ENCODE measurements at regions of chr22 and their contacts with region 1.

Region 1: DNA sequence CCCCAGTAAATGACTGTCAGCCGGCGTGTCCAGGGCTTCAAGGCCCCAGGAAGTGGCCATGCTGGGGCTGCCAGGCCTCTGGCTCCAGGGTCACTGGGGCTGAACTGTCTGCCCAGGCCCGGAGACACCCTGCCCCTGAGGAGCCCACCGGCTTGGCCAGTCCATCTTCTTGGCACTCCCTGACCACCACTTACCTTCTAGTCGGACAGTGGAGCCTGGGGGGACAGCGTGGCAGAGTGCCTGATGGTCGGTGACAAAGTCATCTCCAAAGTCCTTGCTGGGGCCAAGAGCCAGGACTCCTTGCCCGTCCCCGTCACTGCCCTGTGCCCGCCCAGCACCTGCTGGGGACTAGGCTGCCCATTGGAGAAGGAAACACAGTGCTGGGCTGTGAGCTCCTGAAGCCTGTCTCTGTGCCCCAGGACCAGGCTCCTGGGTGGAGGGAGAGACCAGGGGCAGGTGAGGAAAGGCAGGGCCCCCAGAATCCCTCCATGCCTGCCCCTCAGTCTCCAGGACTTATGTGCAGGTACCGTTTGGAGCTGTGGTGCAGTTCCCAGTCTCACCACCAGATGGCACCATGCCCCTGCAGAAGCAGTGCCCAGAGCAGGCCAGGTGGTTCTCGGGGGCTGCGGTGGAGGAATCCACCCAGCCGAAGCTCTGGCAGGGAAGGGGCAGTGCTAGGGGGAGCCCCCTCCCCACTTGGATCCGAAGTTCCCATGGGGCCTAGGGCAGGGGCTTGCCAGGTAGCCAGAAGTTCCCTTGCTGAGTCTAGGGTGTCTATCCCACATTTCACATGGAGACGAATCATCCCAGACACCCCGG is 6.0 kb upstream of the CCDC188 start:
- DNase-seq: peak; percentile 62 to 66
- ATAC-seq: peak; percentile 67 to 90
- H3K4me3 ChIP-seq: no peak overlapping the region
- H3K27ac ChIP-seq: no peak overlapping the region
- H3K4me1 ChIP-seq: no peaks in the 10 kb centered on the region
- CTCF ChIP-seq: peak; percentile 77
- EP300 ChIP-seq: no peak
- POLR2A ChIP-seq: no peak
- RAD21 ChIP-seq: peak; percentile 91 to 96

Region 2: GRCh38 chr22:19543970-19544708 is 612.7 kb before region 1 on chr22:
- CTCF ChIA-PET with region 1: no interaction called
- POLR2A ChIA-PET with region 1: no interaction called
- DNase-seq: no peak
- ATAC-seq: no peak
- H3K4me3 ChIP-seq: no peak overlapping the region
- H3K27ac ChIP-seq: no peak overlapping the region
- H3K4me1 ChIP-seq: no peaks in the 10 kb centered on the region
- CTCF ChIP-seq: no peak
- EP300 ChIP-seq: no peak
- POLR2A ChIP-seq: no peak
- RAD21 ChIP-seq: no peak

Region 3: GRCh38 chr22:20238536-20238900 is 81.7 kb after region 1 on chr22:
- CTCF ChIA-PET with region 1: interaction called, 14 read pairs
- POLR2A ChIA-PET with region 1: no interaction called
- DNase-seq: peak; percentile 48 to 74
- ATAC-seq: peak; percentile 74 to 95
- H3K4me3 ChIP-seq: no peak overlapping the region
- H3K27ac ChIP-seq: no peak overlapping the region
- H3K4me1 ChIP-seq: no peaks in the 10 kb centered on the region
- CTCF ChIP-seq: peak; percentile 39
- EP300 ChIP-seq: no peak
- POLR2A ChIP-seq: no peak
- RAD21 ChIP-seq: peak; percentile 50 to 66; a peak in 4 of 5 replicates

Region 4: GRCh38 chr22:20283674-20284066 is 126.8 kb after region 1 on chr22:
- CTCF ChIA-PET with region 1: interaction called, 92 read pairs
- POLR2A ChIA-PET with region 1: no interaction called
- DNase-seq: no peak
- ATAC-seq: no peak
- H3K4me3 ChIP-seq: no peak overlapping the region
- H3K27ac ChIP-seq: no peak overlapping the region
- H3K4me1 ChIP-seq: no peaks in the 10 kb centered on the region
- CTCF ChIP-seq: no peak
- EP300 ChIP-seq: no peak
- POLR2A ChIP-seq: no peak
- RAD21 ChIP-seq: no peak

Region 5: GRCh38 chr22:20292673-20293232 is 135.9 kb after region 1 on chr22:
- CTCF ChIA-PET with region 1: interaction called, 92 read pairs
- POLR2A ChIA-PET with region 1: no interaction called
- DNase-seq: no peak
- ATAC-seq: no peak
- H3K4me3 ChIP-seq: no peak overlapping the region
- H3K27ac ChIP-seq: no peak overlapping the region
- H3K4me1 ChIP-seq: no peaks in the 10 kb centered on the region
- CTCF ChIP-seq: no peak
- EP300 ChIP-seq: no peak
- POLR2A ChIP-seq: no peak
- RAD21 ChIP-seq: no peak